Naive thymus-derived CD4-positive, alpha-beta T cell (primary cell): ENCODE measurements at regions of chr10 and their contacts with region 1.

Region 1: GRCh38 chr10:47207281-47207615 is 92.7 kb upstream of the GDF10 start:
- DNase-seq: peak in 7 of 9 donors; percentile 18 to 38 (median 25)
- ATAC-seq: peak; percentile 66
- H3K4me3 ChIP-seq: peak overlapping the region; percentile 28
- H3K4me3 Mint-ChIP-seq: peak overlapping the region; percentile 63 to 84 (median 74)
- H3K27ac ChIP-seq: peak overlapping the region; percentile 47
- H3K27ac Mint-ChIP-seq: peak overlapping the region; percentile 70 to 99 (median 96)
- H3K4me1 ChIP-seq: peaks cover 25 to 55% of the 10 kb centered on the region in 2 donors
- H3K4me1 Mint-ChIP-seq: peaks cover 23 to 79% (median 70%) of the 10 kb centered on the region in 7 donors
- H3K27me3 ChIP-seq: no peaks in the 10 kb centered on the region
- H3K27me3 Mint-ChIP-seq: no peaks in the 10 kb centered on the region

Region 2: GRCh38 chr10:46273506-46274477 is 933.5 kb before region 1 on chr10:
- CTCF ChIA-PET with region 1: no interaction called
- POLR2A ChIA-PET with region 1: no interaction called
- intact Hi-C with region 1: no loop called
- DNase-seq: no peak
- ATAC-seq: no peak
- H3K4me3 ChIP-seq: no peak overlapping the region
- H3K4me3 Mint-ChIP-seq: peak overlapping the region in 2 of 10 donors; percentile 29 to 76
- H3K27ac ChIP-seq: no peak overlapping the region
- H3K27ac Mint-ChIP-seq: peak overlapping the region; percentile 12 to 99 (median 94)
- H3K4me1 ChIP-seq: peaks cover 30 to 37% of the 10 kb centered on the region in 2 donors
- H3K4me1 Mint-ChIP-seq: peaks cover 27 to 50% (median 43%) of the 10 kb centered on the region in 7 donors
- H3K27me3 ChIP-seq: no peaks in the 10 kb centered on the region
- H3K27me3 Mint-ChIP-seq: peaks cover 0 to 27% (median 0%) of the 10 kb centered on the region in 5 donors

Region 3: GRCh38 chr10:47008769-47009168 is 198.5 kb before region 1 on chr10:
- CTCF ChIA-PET with region 1: no interaction called
- POLR2A ChIA-PET with region 1: no interaction called
- intact Hi-C with region 1: no loop called
- DNase-seq: no peak
- ATAC-seq: no peak
- H3K4me3 ChIP-seq: no peak overlapping the region
- H3K4me3 Mint-ChIP-seq: no peak overlapping the region
- H3K27ac ChIP-seq: no peak overlapping the region
- H3K27ac Mint-ChIP-seq: no peak overlapping the region
- H3K4me1 ChIP-seq: no peaks in the 10 kb centered on the region
- H3K4me1 Mint-ChIP-seq: no peaks in the 10 kb centered on the region
- H3K27me3 ChIP-seq: no peaks in the 10 kb centered on the region
- H3K27me3 Mint-ChIP-seq: peaks cover 0 to 28% (median 10%) of the 10 kb centered on the region in 5 donors

Region 4: DNA sequence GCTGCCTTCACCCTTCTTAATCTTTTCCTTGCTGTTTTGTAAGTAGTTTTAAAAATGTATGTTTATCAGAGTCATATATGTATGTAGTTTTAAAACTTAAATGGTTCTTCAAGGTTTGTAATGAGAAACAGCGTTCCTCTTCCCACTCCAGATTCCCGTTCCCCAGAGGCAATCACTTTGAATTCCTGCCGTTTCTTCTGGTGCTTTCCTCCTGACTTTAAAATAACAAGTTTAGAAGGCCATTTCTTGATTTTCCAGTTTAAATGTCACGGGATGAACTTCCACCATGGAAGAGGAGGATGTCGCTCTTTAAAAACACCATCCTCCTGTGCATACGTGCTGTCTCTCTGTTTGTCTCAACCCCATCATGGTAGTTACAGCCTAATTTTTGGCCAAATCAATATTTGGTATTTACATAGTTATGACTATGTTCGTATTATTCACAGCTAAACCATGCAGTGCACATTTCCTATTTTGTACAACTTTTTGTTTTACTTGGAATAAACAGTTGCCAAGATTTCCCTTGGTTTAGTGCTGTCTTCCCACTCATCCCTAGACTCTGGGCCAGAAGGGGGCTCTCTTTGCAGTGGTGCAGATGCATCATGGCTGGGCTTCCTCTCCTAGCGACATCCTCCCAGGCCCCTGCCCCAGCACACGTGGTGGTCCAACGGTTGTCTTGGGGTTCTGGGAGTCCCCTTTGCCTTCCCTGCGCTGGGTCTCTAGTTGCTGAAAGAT is 144.6 kb before region 1 on chr10:
- CTCF ChIA-PET with region 1: no interaction called
- POLR2A ChIA-PET with region 1: no interaction called
- intact Hi-C with region 1: no loop called
- DNase-seq: no peak
- ATAC-seq: no peak
- H3K4me3 ChIP-seq: no peak overlapping the region
- H3K4me3 Mint-ChIP-seq: no peak overlapping the region
- H3K27ac ChIP-seq: no peak overlapping the region
- H3K27ac Mint-ChIP-seq: peak overlapping the region in 1 of 9 donors; percentile 17
- H3K4me1 ChIP-seq: no peaks in the 10 kb centered on the region
- H3K4me1 Mint-ChIP-seq: peaks cover 0 to 3% (median 0%) of the 10 kb centered on the region in 7 donors
- H3K27me3 ChIP-seq: no peaks in the 10 kb centered on the region
- H3K27me3 Mint-ChIP-seq: no peaks in the 10 kb centered on the region

Region 5: DNA sequence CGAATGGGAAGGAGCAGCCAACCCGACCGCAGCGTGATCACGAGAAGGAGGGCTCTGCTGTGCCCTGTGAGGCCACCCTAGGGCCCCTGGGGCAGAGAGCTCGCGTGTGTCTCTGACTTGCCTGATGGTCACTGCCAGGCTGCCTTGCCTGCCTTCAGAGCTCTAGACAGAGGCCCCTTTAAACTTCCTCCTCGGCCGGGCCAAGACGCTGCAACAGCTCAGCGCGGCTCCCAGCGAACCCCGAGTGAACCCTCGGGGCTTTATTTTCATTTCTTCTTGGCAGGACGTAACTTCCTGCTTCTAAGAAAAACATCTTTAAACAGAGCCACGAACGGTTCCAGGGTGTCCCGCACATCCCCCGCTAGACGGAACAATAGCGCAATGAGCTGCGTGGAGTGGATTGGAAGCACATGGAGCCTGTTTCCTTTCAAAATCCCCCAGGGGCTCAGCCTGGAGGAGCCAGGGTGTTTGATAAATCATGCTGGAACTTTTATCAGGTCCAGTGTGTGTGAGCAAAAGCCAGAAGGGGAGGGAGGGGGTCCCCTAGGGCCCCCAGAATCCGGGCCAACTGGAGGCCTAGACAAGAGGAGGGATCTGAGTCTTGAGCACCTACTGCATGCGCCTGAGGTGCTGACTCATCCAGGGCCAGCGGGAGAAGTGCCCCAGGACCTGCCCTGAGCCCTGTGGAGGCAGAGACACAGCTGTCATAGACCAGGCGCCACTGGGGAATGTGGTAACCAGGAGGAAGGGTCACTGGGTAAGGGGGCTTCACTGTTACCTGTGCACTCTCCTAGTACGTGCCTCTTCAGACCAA is 41.3 kb before region 1 on chr10:
- CTCF ChIA-PET with region 1: interaction called, 6 read pairs
- POLR2A ChIA-PET with region 1: interaction called, 22 read pairs
- intact Hi-C with region 1: loop called in 1 of 2 experiments (anchors 1 kb)
- DNase-seq: peak; percentile 41 to 80 (median 68)
- ATAC-seq: peak; percentile 82
- H3K4me3 ChIP-seq: peak overlapping the region; percentile 71
- H3K4me3 Mint-ChIP-seq: peak overlapping the region; percentile 79 to 93 (median 92)
- H3K27ac ChIP-seq: peak overlapping the region; percentile 77
- H3K27ac Mint-ChIP-seq: peak overlapping the region; percentile 84 to 100 (median 99)
- H3K4me1 ChIP-seq: peaks cover 12 to 23% of the 10 kb centered on the region in 2 donors
- H3K4me1 Mint-ChIP-seq: peaks cover 19 to 43% (median 28%) of the 10 kb centered on the region in 7 donors
- H3K27me3 ChIP-seq: no peaks in the 10 kb centered on the region
- H3K27me3 Mint-ChIP-seq: peaks cover 0 to 9% (median 0%) of the 10 kb centered on the region in 5 donors

Region 6: DNA sequence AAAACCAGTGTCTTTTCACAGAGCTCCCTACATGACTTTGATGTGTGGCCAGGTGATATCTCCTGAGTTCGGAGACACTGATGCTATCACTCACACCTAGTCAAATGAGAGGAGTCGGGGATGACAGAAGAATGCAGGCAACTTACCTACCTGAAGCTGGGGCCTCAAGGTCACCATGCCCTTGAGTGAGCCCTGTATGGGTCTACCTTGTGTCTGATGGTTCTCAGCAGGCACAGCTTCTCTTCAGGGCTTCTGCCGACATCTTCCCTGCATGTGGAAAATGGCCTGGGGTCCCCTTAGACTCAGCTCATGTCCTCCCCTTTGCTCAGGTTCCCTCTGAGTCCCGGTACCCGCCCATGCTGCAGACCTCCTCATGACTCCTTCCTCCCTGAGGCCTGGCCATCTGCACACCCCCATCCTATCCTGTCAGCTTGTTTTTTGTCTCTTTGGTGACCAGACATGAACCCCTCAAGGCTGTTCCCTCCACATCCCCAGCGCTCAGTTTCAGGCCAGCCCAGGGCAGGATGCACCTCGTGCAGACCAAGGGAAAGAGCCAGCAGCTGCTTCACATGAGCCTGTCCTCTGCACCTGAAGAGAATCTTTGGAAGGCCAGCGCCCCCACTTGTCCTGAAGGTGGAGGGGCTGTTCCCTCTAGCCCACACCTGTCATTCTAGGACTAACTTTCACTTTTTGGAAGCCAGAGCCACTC is 18.1 kb after region 1 on chr10:
- CTCF ChIA-PET with region 1: no interaction called
- POLR2A ChIA-PET with region 1: no interaction called
- intact Hi-C with region 1: loop called in 1 of 2 experiments (anchors 2 kb)
- DNase-seq: no peak
- ATAC-seq: no peak
- H3K4me3 ChIP-seq: no peak overlapping the region
- H3K4me3 Mint-ChIP-seq: no peak overlapping the region
- H3K27ac ChIP-seq: no peak overlapping the region
- H3K27ac Mint-ChIP-seq: peak overlapping the region in 1 of 9 donors; percentile 28
- H3K4me1 ChIP-seq: peaks cover 0 to 8% of the 10 kb centered on the region in 2 donors
- H3K4me1 Mint-ChIP-seq: peaks cover 0 to 33% (median 20%) of the 10 kb centered on the region in 7 donors
- H3K27me3 ChIP-seq: no peaks in the 10 kb centered on the region
- H3K27me3 Mint-ChIP-seq: no peaks in the 10 kb centered on the region